ENCODE measurements at regions of chr19 and their contacts with region 1.

Region 1: DNA sequence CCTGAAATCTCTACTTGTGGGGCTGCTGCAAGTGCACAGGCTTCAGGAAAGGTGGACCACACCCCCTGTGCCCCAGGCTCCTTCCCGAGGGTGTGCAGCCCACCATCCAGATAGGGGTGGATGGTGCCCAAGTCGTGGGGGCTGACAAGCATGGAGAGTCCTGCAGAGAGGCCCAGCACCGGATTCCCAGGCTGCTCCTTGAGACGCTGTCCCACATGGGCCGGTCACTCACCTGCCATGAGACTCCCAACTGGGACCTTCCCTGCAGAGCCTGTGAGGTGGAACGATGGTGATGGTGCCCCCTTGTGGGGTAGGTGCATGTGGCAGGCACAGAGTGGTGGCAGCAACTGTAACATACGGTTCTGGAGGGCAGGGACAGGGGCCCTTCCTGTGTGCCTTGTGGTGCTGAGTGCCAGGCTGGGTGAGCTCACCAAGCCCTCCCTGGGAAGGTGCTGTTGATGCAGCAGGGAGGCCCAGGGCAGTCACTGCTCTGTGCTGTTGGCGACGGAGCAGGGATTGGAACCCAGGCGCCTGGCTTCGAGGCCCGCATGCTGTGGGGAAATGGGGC is 33.0 kb downstream of the PPP1R37 start:
- DNase-seq: peak; percentile 65 to 78
- ATAC-seq: peak; percentile 81 to 90 (median 88)
- H3K4me3 ChIP-seq: no peak overlapping the region
- H3K27ac ChIP-seq: no peak overlapping the region
- H3K4me1 ChIP-seq: peaks cover 4% of the 10 kb centered on the region
- H3K27me3 ChIP-seq: no peaks in the 10 kb centered on the region
- CTCF ChIP-seq: peak; percentile 69

Region 2: DNA sequence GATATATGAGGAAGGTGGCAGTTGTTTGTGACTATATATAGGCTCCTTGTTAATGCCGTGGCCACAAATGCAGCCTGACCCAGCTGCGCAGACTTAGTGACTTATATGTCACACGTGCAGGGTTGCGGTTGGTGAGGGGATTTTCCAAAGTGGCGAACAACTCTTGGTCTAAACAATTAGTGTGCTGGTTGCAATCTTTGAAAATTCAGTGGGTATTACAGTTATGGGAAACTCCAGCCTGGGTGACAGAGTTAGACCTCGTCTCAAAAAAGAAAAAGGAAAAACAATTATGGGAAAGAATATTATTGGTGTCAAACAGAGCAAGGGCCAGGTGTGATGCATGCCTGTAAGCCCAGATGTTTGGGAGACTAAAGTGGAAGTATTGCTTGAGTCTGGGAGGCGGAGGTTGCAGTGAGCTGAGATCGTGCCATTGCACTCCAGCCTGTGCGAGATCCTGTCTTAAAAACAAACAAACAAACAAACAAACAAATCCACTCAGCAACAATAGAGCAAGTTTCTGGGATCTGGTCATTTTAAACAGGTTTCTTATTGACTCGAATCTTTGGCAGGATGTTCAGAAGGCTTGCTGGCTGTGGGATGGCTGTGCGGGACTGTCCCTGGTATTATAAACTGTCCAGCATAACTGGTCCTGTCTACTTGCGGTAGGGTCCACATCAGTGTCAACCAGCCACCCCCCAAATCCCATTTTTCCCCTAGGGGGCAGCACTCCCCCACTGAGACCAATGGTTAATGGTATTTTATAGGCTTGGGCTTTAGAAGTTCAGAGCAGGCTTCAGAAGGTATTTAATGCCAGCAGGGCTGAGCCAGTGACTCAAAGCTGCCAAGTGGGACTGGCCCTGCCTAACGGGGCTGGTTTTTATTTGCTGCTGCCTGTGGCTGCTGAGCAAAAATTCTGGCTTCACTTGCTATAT is 109.4 kb before region 1 on chr19:
- intact Hi-C with region 1: loop called in 1 of 2 experiments (anchors 10 kb)
- DNase-seq: peak; percentile 59 to 72
- ATAC-seq: peak; percentile 78 to 92 (median 86)
- H3K4me3 ChIP-seq: no peak overlapping the region
- H3K27ac ChIP-seq: no peak overlapping the region
- H3K4me1 ChIP-seq: no peaks in the 10 kb centered on the region
- H3K27me3 ChIP-seq: no peaks in the 10 kb centered on the region
- CTCF ChIP-seq: peak; percentile 50

Region 3: DNA sequence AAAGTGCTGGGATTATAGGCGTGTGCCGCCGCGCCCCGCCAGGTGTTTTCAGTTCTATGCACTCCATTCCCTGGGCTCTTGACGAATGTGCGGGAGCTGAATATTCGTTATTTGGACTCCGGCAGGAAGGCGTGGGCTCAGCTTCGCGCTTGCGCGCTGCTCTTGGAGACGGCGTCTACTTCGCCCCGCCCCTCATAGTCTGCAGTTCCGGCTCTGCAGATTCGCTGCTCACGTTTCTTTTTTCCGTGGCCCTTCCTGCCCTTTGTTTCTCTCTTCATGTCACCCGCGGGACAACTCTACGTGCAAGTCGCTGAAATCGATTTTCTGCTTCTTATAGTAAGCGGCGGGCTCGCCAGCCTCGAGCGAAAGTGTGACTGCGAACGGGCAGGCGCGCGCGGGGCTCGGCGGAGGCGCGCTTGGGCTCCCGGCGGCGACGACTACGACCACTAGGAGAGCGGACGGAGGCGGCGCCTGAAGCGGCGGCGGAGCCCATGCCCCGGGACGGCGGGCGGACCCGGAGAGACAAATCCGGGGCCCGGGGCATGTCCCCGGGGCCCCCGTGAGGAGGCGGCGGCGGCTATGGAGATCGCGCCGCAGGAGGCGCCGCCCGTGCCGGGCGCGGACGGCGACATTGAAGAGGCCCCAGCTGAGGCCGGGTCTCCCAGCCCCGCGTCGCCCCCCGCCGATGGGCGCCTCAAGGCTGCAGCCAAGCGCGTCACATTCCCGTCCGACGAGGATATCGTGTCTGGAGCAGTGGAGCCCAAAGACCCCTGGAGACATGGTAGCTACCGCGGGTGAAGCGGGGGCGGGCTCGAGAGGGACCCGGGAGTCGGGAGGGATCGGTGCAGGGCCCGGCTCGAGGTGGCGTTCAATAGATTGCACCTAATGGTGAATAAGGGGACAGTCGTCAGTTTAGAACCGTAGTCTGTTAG is 33.0 kb before region 1 on chr19 and contains the start of gene PPP1R37:
- intact Hi-C with region 1: loop called in 1 of 2 experiments (anchors 5 kb)
- DNase-seq: peak; percentile 94 to 98
- ATAC-seq: peak; percentile 90 to 92 (median 90)
- H3K4me3 ChIP-seq: peak within 1 kb of the TSS; percentile 100
- H3K27ac ChIP-seq: peak within 1 kb of the TSS; percentile 95
- H3K4me1 ChIP-seq: peaks cover 49% of the 10 kb centered on the region
- H3K27me3 ChIP-seq: no peaks in the 10 kb centered on the region
- CTCF ChIP-seq: peak; percentile 35
- total RNA-seq, gene PPP1R37: 27.0 to 34.6 (median 29.1) TPM

Region 4: DNA sequence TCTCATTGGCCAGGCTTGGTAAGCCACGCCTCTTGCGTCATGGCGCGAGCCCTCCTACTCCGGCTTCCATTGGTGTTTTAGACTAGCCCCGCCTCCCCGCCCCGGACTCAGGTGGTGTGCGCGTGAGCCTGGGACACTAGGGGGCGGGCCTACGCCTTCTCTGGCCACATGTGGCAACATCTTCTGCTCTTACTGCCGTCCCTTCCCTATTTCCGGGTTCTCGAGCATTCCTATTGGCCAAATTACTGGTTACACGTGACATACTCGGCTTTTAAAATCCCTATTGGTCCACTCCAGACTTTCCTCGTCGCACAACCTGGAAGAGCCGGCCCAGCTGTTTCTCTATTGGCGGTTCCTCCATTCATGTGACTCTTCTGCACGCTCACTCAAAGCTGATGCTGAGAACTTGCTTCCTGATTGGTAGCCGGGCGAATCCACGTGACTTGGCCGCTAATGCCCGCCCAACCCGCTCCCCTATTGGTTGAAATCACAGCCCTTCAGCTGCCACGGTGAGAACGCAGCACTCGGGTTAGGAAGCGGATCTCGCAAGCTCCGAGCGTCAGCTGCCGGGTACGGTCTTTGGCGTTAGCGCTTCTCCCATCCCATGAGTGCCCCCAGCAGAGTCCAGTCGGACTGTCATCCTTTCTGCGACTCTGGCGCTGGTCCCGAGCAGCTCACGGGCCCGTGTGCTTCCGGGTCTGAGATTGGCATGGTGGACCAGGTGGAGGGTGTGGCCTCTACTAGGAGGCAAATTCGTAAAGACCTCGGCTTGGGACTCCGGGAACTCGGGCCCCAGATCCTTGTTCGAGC is 52.5 kb after region 1 on chr19 and contains the start of gene BLOC1S3:
- intact Hi-C with region 1: no loop called
- DNase-seq: peak; percentile 100
- ATAC-seq: peak; percentile 90 to 96 (median 94)
- H3K4me3 ChIP-seq: peak within 1 kb of the TSS; percentile 77
- H3K27ac ChIP-seq: peak within 1 kb of the TSS; percentile 96
- H3K4me1 ChIP-seq: peaks cover 12% of the 10 kb centered on the region
- H3K27me3 ChIP-seq: no peaks in the 10 kb centered on the region
- CTCF ChIP-seq: peak; percentile 25
- total RNA-seq, gene BLOC1S3: 4.1 to 7.8 (median 5.1) TPM

Region 5: GRCh38 chr19:45323671-45324081 is 197.7 kb after region 1 on chr19:
- intact Hi-C with region 1: no loop called
- DNase-seq: peak; percentile 77 to 91
- ATAC-seq: peak; percentile 66 to 75 (median 72)
- H3K4me3 ChIP-seq: peak overlapping the region; percentile 66
- H3K27ac ChIP-seq: peak overlapping the region; percentile 97
- H3K4me1 ChIP-seq: peaks cover 20% of the 10 kb centered on the region
- H3K27me3 ChIP-seq: no peaks in the 10 kb centered on the region
- CTCF ChIP-seq: no peak

Region 6: DNA sequence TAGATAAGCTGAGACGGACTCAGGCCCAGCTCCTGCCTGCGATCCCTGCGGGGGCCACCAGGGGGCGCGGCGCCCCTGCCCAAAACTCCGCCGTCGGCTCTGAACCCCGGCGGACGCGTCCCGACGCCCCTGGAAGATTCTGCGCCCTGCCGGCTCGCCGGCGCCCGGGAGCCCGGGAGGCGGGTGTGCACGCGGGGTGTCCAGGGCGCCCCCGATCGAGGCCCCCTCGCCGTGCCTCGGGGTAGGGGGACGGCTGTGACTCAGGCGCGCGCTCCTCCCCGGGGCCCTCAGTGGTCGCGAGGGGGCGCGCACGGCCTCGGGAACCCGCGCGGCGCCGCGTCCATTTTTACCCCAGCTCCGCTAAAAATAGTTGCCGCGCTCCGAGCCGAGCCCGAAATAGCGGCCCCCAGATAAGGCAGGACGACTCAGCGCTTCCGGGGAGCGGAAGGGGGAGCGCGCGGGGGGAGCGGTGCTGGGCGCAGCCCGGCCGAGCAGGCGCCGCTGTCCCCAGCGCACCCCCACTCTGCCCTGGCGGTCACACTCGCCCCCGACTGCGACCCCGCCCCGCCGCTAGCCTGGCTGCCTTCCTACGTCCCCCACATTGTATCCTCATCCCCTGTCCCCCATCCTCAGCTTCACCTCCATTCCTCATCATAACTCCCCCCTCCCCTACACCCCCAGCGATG is 313.7 kb after region 1 on chr19:
- intact Hi-C with region 1: no loop called
- DNase-seq: peak; percentile 91 to 96
- ATAC-seq: peak; percentile 82 to 87 (median 84)
- H3K4me3 ChIP-seq: peak overlapping the region; percentile 83
- H3K27ac ChIP-seq: peak overlapping the region; percentile 95
- H3K4me1 ChIP-seq: peaks cover 14% of the 10 kb centered on the region
- H3K27me3 ChIP-seq: no peaks in the 10 kb centered on the region
- CTCF ChIP-seq: peak; percentile 100